A673 (cell line): ENCODE measurements at regions of chr7 and their contacts with region 1.

Region 1: DNA sequence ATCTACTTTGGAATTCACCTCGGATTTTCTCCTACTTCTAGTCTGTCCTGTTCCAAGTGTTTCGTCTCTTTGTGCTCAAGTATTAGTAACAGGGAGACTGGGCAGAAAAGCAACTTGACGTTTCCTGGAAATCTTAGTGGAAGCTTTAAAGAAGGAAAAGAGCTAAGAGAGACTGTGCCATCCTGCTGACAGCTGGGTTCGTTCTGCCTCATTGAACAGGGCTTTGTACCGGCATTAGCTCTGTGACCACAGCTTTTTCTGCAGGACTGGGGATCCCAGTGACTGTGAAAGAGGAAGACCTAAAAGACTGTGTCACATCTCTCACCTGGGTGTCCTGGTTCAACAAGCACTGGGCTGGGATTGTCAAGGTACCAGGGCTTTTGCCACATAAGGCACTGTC is 70.8 kb upstream of the CDCA7L start:
- DNase-seq: no peak
- H3K4me3 ChIP-seq: no peak overlapping the region
- H3K27ac ChIP-seq: no peak overlapping the region
- H3K4me1 ChIP-seq: no peaks in the 10 kb centered on the region
- H3K27me3 ChIP-seq: peaks cover 26% of the 10 kb centered on the region
- CTCF ChIP-seq: no peak

Region 2: DNA sequence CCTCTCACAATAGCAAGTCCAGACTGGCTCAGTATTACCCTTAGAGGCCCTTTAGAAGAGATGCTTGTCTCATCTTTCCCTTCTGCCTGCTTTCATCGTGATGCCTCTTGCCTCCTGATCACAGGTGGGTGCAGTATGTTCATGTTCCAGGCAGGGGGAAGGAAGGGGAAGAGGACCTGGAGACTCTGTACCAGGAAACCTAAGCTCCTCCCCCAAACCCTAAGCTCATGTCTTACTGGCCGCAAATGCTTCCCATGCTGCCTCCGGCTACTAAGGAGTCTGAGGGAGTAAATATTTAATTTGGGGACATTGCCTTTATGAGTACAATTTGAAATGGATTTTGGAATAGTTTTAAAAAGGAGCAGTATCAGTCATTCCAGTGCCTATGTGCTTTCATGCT is 263.4 kb before region 1 on chr7:
- CTCF ChIA-PET with region 1: no interaction called
- POLR2A ChIA-PET with region 1: no interaction called
- intact Hi-C with region 1: no loop called
- DNase-seq: no peak
- H3K4me3 ChIP-seq: no peak overlapping the region
- H3K27ac ChIP-seq: no peak overlapping the region
- H3K4me1 ChIP-seq: no peaks in the 10 kb centered on the region
- H3K27me3 ChIP-seq: peaks cover 81% of the 10 kb centered on the region
- CTCF ChIP-seq: no peak

Region 3: DNA sequence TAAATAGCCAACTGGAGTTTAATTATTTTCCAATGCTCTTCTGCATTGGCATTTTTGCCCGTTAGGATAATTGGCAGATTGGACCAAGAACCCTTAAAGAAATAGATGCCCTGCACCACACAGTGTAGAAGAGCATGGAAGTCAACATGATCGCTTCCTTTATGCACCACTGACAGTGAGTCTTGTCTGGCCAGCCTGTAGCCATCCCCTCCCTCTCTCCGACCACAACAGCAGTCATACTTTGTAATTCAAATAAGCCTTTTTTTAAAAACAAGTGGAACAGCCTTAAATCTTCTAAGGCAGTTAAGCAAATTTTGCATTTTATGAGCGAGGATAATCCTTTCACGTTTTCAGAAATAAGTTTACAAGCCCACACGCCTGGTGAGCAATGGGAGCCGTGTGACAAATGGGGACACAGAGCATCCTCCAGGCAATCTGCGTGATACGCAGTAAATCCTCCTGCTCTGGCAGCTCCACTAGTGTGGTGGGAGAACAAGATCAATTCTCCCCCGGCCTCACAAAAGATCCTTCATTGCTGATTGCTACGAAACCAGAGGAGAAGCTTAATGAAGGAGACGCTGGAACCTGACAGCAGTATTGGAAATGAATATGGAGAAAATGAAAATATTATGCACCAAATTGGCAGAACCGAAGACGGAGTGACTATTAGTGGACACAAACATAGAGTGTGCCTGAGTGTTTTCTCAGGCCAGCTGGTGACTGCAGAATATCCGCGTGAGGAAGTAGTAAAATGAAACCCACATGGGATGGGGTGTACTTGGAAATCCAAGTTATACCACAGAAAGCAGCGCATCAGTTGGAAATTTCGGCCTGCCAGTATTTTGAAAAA is 33.4 kb after region 1 on chr7:
- CTCF ChIA-PET with region 1: no interaction called
- POLR2A ChIA-PET with region 1: interaction called, 11 read pairs
- intact Hi-C with region 1: no loop called
- DNase-seq: peak; percentile 68
- H3K4me3 ChIP-seq: no peak overlapping the region
- H3K27ac ChIP-seq: no peak overlapping the region
- H3K4me1 ChIP-seq: peaks cover 27% of the 10 kb centered on the region
- H3K27me3 ChIP-seq: peaks cover 65% of the 10 kb centered on the region
- CTCF ChIP-seq: no peak

Region 4: GRCh38 chr7:22061775-22062174 is 45.3 kb after region 1 on chr7:
- CTCF ChIA-PET with region 1: no interaction called
- POLR2A ChIA-PET with region 1: no interaction called
- intact Hi-C with region 1: no loop called
- DNase-seq: no peak
- H3K4me3 ChIP-seq: no peak overlapping the region
- H3K27ac ChIP-seq: no peak overlapping the region
- H3K4me1 ChIP-seq: no peaks in the 10 kb centered on the region
- H3K27me3 ChIP-seq: peaks cover 18% of the 10 kb centered on the region
- CTCF ChIP-seq: no peak